KBM-7 (cell line): ENCODE measurements at regions of chrX and their contacts with region 1.

Region 1: GRCh38 chrX:1661048-1661921 is 46.4 kb downstream of the ASMT start:
- DNase-seq: peak; percentile 92

Region 2: DNA sequence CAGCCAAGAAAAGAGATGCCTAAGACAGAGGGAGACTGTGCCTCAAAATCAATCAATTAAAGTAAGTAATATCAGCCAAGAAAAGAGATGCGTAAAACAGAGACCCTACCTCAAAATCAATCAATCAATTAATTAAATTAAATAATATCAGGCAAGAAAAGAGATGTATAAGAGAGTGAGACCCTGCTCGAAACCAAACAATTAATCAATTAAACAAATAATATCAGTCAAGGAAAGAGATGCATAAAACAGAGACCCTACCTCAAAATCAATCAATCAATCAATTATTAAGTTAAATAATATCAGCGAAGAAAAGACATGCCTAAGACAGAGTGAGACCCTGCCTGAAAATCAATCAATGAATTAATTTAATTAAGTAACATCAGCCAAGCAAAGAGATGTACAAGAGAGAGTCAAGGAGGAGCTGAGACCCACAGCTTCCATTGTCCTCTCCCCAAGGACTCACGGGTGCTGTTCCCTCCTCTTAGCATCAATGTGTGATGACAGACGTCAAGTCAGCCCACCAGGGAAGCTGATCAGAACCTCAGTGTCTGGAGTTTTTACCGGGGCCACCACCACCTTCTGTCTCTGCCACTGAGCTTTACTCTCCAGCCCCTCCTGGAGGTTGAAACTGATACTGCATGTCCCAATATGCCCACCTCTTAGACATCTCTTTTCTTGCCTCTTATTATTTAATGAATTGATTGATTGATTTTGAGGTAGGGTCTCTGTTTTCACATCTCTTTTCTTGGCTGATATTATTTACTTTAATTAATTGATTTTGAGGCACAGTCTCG is 80.4 kb before region 1 on chrX:
- in situ Hi-C with region 1: no loop called
- DNase-seq: peak; percentile 99

Region 3: GRCh38 chrX:2595258-2595657 is 934.0 kb after region 1 on chrX:
- in situ Hi-C with region 1: loop called (anchors 10 kb)
- DNase-seq: no peak